ENCODE measurements at regions of chr1 and their contacts with region 1.

Region 1: GRCh38 chr1:230066466-230067404 is at the start of gene GALNT2:
- DNase-seq: peak; percentile 88
- H3K4me3 Mint-ChIP-seq: peak within 1 kb of the TSS; percentile 93
- H3K27ac Mint-ChIP-seq: peak within 1 kb of the TSS; percentile 89
- H3K4me1 Mint-ChIP-seq: peaks cover 48% of the 10 kb centered on the region
- H3K27me3 Mint-ChIP-seq: peaks cover 3% of the 10 kb centered on the region
- total RNA-seq, gene GALNT2: 67.6 and 67.9 TPM in 2 replicates

Region 2: DNA sequence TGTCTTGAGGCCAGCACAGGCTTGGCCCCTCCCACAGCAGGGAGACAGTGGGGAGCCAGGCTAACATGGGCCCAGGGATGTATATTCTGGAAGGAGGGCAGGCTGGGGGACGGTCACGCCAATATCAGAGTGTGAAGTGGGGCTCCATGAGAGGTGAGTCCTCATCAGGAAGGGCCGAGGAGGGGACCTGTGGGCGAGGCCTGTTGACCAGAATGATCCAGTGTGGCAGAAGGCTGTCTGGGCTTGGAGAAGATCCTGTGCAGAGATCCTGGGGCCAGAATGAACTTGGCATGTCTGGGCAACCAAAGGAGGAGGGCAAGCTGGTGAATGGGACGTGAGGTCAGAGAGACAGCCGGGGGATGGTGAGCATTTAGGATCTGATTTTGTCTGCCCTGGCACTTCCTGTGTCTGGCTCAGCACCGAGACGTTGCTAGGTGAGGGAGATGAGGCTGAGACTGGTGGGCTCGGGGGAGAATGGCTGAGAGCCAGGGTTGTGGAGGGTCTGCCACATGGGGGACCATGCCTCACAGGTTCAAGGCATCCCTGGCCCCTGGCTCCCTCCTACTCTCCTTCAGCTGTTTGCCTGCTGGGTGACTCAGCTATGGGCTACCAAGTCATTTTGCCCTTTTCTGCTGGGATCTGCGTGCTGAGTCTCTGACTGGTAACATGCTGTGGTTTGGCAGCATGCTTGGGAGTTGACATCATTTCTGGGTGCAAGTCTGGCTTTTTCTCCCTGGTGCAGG is 17.6 kb after region 1 on chr1:
- intact Hi-C with region 1: loop called (anchors 1 kb)
- DNase-seq: peak; percentile 23
- H3K4me3 Mint-ChIP-seq: peak overlapping the region; percentile 30
- H3K27ac Mint-ChIP-seq: peak overlapping the region; percentile 83
- H3K4me1 Mint-ChIP-seq: peaks cover 66% of the 10 kb centered on the region
- H3K27me3 Mint-ChIP-seq: peaks cover 1% of the 10 kb centered on the region

Region 3: DNA sequence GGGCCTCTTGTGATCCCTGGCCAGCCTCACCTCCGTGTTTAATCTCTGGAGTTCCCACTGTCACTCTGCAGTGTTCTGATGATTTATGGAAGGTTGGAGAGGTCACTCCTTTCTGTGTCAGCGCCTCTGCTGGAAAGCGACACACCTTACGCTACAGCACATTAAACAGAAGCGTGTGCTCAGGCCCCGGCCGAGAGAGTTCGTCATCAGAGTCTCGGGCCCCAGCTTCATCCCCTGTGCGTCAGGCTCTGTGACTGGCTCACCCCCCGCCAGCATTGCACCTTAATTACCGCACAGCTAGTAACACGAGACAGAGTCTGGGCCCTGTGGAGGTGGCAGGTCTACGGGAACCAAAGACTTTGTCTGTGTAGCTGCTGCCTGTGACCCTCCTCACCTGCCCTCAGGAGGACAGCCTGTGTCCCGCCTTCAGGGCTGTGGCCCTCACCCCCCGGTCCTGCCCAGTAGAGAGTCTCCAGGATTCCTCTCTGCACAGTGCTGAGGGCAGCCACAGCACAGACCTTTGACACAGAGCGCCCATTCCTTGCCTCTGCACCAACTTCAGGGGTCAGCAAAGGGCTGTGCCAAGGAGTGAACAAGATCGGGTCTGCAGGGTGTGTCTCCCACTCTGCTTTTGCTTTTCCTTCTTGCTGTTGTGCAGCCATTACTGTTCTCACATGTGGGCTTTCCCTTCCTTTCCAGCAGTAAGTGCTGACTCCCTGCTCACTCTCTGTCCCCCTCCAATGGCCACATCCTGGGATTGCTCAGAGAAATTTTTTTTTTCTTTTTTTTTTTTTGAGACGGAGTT is 201.8 kb after region 1 on chr1:
- intact Hi-C with region 1: no loop called
- DNase-seq: no peak
- H3K4me3 Mint-ChIP-seq: no peak overlapping the region
- H3K27ac Mint-ChIP-seq: peak overlapping the region; percentile 64
- H3K4me1 Mint-ChIP-seq: peaks cover 15% of the 10 kb centered on the region
- H3K27me3 Mint-ChIP-seq: no peaks in the 10 kb centered on the region

Measured in activated T-helper 1 cell treated with anti-CD3 and anti-CD28 coated beads, Interleukin-12 subunit alpha, Interleukin-12 subunit beta, Interleukin-2, Interleukin-4 antibody, amounts not matched to agents 30 ng/mL and 10 ng/mL and 1 ng/mL, durations not matched to agents 14 hours and 24 hours and 36 hours (primary cell).